Esophagus muscularis mucosa (tissue), 4 donors: ENCODE measurements at regions of chr10 and their contacts with region 1.

Region 1: DNA sequence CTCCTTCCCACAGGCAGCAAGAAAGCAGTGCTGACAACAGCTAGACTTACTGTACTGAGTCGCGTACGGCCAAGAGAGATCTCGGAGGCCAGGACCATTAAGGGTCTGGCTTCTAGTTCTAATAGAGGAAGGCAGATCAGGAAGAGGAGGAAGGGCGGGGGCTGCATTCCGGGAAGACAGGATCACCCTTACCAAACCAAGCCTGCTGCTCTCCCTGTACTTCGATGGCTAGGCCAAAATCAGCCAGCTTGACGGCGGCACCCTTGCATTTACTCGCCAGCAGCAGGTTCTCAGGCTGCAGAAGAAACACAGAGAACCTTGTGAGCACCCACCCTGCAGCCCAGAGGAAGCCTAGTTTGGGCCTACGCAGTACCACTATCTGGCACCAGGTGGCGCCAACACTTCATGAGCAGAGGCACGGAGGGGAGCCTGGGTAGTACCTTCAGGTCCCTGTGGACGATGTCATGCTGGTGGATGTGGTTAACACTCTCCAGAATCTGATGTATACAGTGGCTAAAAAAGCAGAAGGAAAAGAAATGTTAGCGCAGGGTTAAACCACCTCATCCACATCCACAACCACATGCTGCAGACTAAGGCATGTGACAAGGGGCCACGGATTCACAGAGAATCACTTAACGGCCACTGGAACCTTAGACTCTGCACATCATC is 25.4 kb downstream of the CAMK2G start:
- DNase-seq: peak; percentile 97
- H3K4me3 ChIP-seq: no peak overlapping the region
- H3K27ac ChIP-seq: peak overlapping the region; percentile 86 to 93 (median 92)
- H3K4me1 ChIP-seq: peaks cover 22 to 59% (median 54%) of the 10 kb centered on the region in 4 donors
- H3K27me3 ChIP-seq: no peaks in the 10 kb centered on the region
- CTCF ChIP-seq: peak in 2 of 3 experiments; percentile 100
- EP300 ChIP-seq: no peak
- POLR2A ChIP-seq: no peak

Region 2: GRCh38 chr10:73873838-73874215 is 24.9 kb after region 1 on chr10:
- intact Hi-C with region 1: loop called (anchors 1 kb)
- DNase-seq: no peak
- H3K4me3 ChIP-seq: peak overlapping the region; percentile 88 to 99 (median 96)
- H3K27ac ChIP-seq: peak overlapping the region; percentile 82 to 93 (median 85)
- H3K4me1 ChIP-seq: peaks cover 21 to 68% (median 66%) of the 10 kb centered on the region in 4 donors
- H3K27me3 ChIP-seq: no peaks in the 10 kb centered on the region
- CTCF ChIP-seq: no peak
- EP300 ChIP-seq: no peak
- POLR2A ChIP-seq: no peak

Region 3: GRCh38 chr10:73879296-73880173 is 30.6 kb after region 1 on chr10:
- intact Hi-C with region 1: loop called (anchors 1 kb)
- DNase-seq: peak; percentile 96
- H3K4me3 ChIP-seq: no peak overlapping the region
- H3K27ac ChIP-seq: peak overlapping the region; percentile 55 to 93 (median 63)
- H3K4me1 ChIP-seq: peaks cover 0 to 30% (median 29%) of the 10 kb centered on the region in 4 donors
- H3K27me3 ChIP-seq: no peaks in the 10 kb centered on the region
- CTCF ChIP-seq: peak; percentile 94 to 99 (median 97)
- EP300 ChIP-seq: no peak
- POLR2A ChIP-seq: no peak

Region 4: DNA sequence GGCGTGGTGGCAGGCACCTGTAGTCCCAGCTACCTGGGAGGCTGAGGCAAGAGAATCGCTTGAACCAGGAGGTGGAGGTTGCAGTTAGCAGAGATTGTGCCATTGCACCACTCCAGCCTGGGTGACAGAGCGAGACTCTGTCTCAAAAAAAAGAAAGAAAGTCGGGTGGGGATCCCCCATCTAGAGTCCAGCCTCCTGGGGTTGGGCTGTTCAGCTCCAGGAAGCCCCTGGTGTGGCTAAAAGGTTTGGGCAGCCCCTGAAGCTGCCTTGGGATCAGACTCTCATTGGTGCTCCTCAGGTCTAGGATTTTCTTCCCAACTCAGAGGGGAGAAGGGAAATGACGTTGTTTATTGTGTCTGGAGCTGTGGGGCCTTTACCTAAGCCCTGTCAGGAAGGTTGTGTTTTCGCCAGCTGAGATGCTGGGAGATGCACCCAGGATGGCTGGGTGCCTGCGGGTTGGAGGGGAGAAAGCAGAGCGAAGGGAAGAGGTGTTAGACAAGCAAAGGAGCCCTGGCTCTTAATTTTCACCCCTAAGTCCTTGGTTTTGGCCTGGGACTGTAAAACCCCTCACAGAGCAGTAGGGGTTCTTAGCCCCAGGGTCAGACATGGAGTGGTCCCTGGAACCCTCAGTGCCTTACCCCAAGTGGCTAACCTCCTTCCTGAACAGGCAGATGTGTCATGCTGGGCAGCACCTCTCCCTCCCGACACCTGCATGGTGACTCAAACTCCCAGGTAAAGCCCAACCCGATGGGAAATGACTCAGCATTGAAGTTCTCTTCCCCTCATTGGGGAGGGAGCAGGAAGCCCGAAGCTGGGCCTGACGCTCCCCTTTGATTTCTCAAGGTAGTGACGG is 83.0 kb after region 1 on chr10:
- intact Hi-C with region 1: no loop called
- DNase-seq: no peak
- H3K4me3 ChIP-seq: no peak overlapping the region
- H3K27ac ChIP-seq: no peak overlapping the region
- H3K4me1 ChIP-seq: peaks cover 0 to 8% (median 3%) of the 10 kb centered on the region in 4 donors
- H3K27me3 ChIP-seq: no peaks in the 10 kb centered on the region
- CTCF ChIP-seq: no peak
- EP300 ChIP-seq: no peak
- POLR2A ChIP-seq: no peak

Region 5: GRCh38 chr10:75303045-75303781 is 1454.3 kb after region 1 on chr10:
- intact Hi-C with region 1: no loop called
- DNase-seq: no peak
- H3K4me3 ChIP-seq: no peak overlapping the region
- H3K27ac ChIP-seq: no peak overlapping the region
- H3K4me1 ChIP-seq: no peaks in the 10 kb centered on the region
- H3K27me3 ChIP-seq: no peaks in the 10 kb centered on the region
- CTCF ChIP-seq: no peak
- EP300 ChIP-seq: no peak
- POLR2A ChIP-seq: no peak